ENCODE measurements at regions of chr5 and their contacts with region 1.

Region 1: DNA sequence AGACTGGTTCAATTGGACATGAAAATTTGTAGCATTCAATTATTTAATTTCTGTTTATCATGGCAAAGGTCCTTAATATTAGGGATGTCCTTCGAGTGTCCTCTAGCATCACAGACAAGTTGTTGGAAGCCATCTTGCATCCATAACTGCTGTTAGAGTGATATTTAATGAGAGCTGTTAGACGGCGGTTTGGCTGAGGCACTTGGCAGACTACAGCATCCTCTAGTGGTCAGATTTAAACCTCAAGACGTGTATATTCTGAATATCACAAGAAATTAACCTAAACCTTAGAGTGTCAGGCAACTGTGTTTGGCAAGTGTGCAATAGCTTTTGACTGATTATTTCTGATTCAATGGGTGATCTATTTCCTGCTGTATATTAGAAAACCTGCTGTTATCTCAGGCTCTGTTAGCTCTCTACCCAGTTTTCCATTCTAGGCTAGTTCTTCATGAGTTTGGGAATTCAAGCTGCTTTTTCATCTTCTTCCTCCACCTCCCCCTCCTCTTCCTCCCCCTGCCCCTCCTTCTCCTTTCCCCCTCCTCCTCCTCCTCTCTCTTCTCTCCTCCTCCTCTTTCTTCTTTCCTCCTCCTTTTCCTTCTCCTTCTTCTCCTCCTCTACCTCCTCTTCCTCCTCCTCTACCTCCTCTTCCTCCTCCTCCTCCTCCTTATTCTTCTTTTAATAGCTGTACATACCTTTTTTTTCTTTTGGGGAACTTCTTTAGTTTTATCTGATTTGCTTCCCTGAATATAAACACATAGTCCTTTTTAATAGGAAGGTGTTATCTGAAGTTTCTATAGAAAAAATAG is 8.6 kb downstream of the SPINK1 start:
- DNase-seq: peak; percentile 19
- ATAC-seq: peak; percentile 83
- H3K4me3 Mint-ChIP-seq: no peak overlapping the region
- H3K27ac Mint-ChIP-seq: no peak overlapping the region
- H3K4me1 Mint-ChIP-seq: peaks cover 18% of the 10 kb centered on the region
- H3K27me3 Mint-ChIP-seq: no peaks in the 10 kb centered on the region
- CTCF ChIP-seq: peak; percentile 70

Region 2: DNA sequence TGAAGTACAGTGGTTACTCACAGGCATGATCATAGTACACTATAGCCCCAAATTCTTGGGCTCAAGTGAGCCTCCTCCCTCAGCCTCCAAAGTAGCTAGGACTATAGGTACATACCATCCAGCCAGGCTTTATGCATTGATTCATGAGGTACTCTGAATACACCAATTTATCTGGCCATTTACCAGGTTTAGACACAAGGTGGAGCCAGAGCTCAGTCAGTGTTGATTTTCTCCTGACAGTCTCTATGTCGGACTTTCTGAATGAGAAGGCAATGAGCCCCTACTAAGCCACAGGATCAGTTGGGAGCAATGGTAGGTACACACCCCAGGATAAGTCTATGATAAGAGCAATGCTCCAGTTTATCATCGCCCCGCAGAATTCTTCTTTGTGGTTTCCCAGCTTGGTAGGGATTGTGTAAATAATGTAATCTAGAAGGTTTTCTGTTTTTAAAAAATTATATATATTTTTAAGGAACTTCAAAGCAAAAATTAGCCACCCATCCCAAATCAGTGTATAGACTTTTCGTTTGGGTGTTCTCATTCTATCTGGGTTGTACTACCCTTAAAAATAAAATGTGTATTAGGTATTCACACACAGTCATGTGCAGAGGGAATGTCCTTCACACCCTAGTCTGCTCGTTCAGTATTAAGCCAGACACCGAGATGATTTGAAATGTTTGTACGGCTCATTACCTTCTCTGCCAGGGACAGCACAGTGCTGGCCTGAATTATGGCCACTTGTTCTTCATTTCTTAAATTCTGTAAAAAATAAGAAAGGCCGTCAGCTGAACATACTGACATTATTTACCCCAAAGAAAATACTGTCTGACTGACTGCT is 194.6 kb before region 1 on chr5:
- CTCF ChIA-PET with region 1: interaction called, 41 read pairs
- POLR2A ChIA-PET with region 1: no interaction called
- DNase-seq: peak; percentile 74
- ATAC-seq: peak; percentile 96
- H3K4me3 Mint-ChIP-seq: no peak overlapping the region
- H3K27ac Mint-ChIP-seq: 0 out of 2 replicates have a peak overlapping the region, but pooled peaks have one; percentile 15
- H3K4me1 Mint-ChIP-seq: peaks cover 16% of the 10 kb centered on the region
- H3K27me3 Mint-ChIP-seq: no peaks in the 10 kb centered on the region
- CTCF ChIP-seq: peak; percentile 56

Region 3: DNA sequence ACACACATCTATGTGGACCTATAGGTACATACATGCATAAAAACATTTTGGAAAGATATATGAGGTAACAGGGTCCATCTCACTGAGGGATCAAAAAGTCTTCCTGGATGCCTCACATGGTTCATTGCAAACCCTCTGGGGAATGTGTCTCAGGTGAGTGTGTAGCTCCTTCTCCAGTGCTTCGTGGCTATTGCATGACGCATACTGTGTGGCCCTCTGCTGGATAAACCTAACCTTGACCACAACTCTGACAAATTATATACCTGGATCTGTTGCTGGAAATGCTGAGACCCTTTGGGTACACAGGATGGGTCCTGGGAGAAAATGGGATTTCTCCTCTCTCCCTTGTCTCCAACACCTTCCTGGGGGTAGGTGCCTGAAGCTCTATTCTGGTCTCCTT is 132.3 kb before region 1 on chr5:
- CTCF ChIA-PET with region 1: interaction called, 16 read pairs
- POLR2A ChIA-PET with region 1: no interaction called
- DNase-seq: peak; percentile 19
- ATAC-seq: peak; percentile 92
- H3K4me3 Mint-ChIP-seq: no peak overlapping the region
- H3K27ac Mint-ChIP-seq: no peak overlapping the region
- H3K4me1 Mint-ChIP-seq: peaks cover 13% of the 10 kb centered on the region
- H3K27me3 Mint-ChIP-seq: no peaks in the 10 kb centered on the region
- CTCF ChIP-seq: 0 out of 2 replicates have a peak, but pooled peaks have one; percentile 23

Region 4: DNA sequence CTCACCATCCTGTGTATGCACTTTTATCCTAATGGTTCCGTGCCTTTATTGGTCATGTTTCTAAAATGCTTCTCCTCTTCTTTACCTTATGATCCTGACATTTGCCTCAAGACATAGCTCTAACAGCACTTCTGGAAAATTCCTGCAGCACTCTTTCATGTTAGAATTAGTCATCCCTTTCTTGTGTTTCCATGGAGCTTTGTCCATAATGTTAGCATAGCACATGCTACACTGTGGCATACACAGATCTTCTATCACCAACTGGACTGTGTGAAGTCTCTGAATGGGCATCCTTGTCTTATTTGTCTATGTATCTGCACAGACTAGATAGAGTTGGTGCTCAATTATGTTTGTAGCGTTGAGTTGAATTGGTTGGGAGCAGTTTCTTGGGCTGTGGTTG is 57.6 kb after region 1 on chr5:
- CTCF ChIA-PET with region 1: no interaction called
- POLR2A ChIA-PET with region 1: no interaction called
- DNase-seq: no peak
- ATAC-seq: no peak
- H3K4me3 Mint-ChIP-seq: no peak overlapping the region
- H3K27ac Mint-ChIP-seq: peak overlapping the region; percentile 55; the same call in 1 of the 2 replicates
- H3K4me1 Mint-ChIP-seq: peaks cover 73% of the 10 kb centered on the region
- H3K27me3 Mint-ChIP-seq: no peaks in the 10 kb centered on the region
- CTCF ChIP-seq: no peak